Endothelial cell of umbilical vein (primary cell): ENCODE measurements at regions of chr17 and their contacts with region 1.

Region 1: DNA sequence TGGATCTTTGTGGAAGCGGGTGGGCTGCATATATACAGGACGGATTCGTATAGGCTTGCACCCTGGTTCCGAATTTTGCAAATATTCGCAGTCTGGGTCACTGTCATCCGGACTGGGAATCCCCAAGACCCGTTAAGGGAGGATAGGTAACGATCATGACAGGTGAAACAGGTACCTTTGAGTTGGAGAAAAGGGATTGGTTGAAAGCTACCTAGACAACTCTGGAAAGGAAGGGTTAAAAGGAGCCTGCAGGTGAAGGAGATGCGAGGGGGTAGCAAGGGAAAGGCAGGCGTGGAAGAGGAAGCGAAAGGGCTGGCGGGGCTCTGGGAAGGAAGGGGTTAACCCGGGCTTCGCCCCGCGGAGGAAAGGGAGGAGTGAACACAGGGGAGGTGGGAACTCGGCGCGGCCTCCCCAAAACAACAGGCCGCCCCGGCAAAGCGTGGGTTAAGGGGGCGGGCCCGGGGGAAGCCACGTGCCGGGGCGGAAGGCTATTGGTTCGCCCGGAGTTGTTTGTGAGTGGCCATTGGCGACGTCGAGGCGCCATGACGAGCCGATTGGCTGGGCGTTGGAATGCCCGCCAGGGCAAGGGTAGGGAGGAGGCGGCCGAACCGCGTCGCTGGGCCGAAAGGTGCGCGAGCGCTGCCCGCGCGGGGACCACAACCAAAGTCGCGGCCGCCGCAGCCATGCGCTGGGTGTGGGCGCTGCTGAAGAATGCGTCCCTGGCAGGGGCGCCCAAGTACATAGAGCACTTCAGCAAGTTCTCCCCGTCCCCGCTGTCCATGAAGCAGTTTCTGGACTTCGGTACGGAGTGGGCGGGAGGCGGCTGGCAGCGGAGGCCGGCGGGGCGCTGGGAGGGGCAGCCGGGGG is at the start of gene PDK2:
- DNase-seq: peak; percentile 94
- H3K4me3 ChIP-seq: peak within 1 kb of the TSS; percentile 33 to 85 (median 46)
- H3K27ac ChIP-seq: no peak within 1 kb of the TSS
- H3K4me1 ChIP-seq: peaks cover 10% of the 10 kb centered on the region
- H3K27me3 ChIP-seq: no peaks in the 10 kb centered on the region
- CTCF ChIP-seq: no peak
- POLR2A ChIP-seq: no peak
- total RNA-seq, gene PDK2: 17.4 and 21.3 TPM in 2 replicates

Region 2: DNA sequence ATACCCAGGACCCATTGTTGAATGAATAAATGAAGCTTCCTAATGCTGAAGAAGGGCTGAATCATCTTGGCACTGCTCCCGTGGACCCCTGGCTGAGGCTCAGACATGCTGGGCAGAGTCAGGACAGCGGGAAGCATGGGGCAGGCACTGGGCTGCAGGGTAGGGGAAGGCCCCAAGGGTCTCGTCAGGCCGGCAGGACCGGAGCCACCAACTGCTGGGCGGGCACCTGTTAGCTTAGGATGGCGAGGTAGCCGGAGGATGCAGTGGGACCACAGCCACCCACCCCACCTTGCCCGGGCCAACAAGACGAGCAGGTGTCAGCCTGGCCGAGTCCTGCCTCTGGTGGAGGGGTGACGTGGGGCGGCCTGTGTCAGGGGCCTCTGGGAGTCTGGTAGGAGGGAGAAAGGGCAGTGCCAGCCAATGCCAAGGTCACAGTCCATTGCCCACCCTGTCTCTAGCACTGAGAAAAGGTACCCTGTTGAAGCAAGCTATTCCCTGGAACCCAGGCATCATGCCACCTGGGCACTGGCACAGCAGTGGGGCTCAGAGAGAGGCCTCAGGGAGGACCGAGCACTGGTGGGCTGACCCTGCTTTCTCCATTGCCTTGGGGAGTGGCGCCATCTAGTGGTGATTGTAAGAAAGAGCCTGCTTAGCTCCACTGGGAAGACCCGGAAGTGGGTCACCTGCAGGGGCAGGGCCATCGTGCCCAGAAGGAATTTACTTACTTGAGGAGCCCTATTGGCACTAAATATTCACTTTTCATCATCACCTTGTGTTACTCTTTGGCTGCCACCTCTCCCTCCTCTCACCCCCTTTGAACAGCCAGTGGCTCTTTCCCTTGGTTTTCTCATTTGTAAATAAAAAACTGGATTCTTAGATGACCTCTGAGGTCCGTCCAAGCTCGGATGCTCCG is 96.9 kb before region 1 on chr17:
- CTCF ChIA-PET with region 1: interaction called, 13 read pairs
- POLR2A ChIA-PET with region 1: no interaction called
- dilution Hi-C with region 1: no loop called
- intact Hi-C with region 1: no loop called
- DNase-seq: peak; percentile 74
- H3K4me3 ChIP-seq: no peak overlapping the region
- H3K27ac ChIP-seq: no peak overlapping the region
- H3K4me1 ChIP-seq: no peaks in the 10 kb centered on the region
- H3K27me3 ChIP-seq: peaks cover 41 to 53% of the 10 kb centered on the region in 2 experiments
- CTCF ChIP-seq: peak; percentile 83 to 87
- POLR2A ChIP-seq: no peak

Region 3: DNA sequence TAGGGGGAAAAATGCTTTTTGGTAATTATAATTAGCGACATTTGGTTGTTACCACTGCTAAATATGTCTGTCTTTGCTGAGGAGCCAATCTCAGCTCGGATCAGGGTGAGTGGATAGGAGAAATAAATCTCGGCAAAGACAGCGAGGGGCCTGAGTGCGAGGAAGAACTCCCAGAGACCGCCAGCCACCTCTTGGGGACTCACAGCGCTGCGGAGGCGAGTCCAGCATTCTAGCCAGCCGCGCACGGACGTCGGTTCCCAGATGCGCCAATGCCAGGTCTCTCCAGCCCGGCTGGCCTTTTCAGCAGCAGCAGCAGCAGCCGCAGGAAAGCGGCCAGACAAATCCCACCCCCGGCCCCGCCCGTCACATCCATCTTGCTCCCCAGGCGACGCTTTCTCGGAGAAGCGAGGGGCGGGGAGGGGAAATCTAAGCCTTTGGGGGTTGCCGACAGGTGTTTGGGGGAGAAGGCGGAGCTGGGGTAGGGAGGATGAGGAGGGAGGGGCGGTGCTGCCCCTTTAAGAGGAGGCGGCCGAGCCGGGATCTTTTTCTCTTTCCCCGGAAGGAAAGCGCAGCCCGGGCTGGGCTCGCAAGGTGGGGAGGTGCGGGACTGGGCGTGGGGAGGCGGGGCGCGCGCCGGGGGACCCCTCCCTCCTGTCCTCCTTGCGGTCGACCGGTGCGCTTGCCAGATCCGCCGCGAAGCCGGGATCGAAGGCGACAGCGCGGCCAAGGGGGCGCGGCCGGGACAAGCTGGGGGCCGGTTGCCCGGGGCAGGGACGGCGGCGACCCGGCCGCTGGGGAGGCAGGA is 39.4 kb before region 1 on chr17 and contains the start of gene ITGA3:
- CTCF ChIA-PET with region 1: interaction called, 55 read pairs
- POLR2A ChIA-PET with region 1: no interaction called
- dilution Hi-C with region 1: no loop called
- intact Hi-C with region 1: no loop called
- DNase-seq: peak; percentile 80
- H3K4me3 ChIP-seq: peak within 1 kb of the TSS; percentile 65 to 77 (median 77)
- H3K27ac ChIP-seq: peak within 1 kb of the TSS; percentile 39
- H3K4me1 ChIP-seq: peaks cover 65% of the 10 kb centered on the region
- H3K27me3 ChIP-seq: no peaks in the 10 kb centered on the region
- CTCF ChIP-seq: no peak
- POLR2A ChIP-seq: peak; percentile 57
- total RNA-seq, gene ITGA3: 93.8 and 112 TPM in 2 replicates

Region 4: DNA sequence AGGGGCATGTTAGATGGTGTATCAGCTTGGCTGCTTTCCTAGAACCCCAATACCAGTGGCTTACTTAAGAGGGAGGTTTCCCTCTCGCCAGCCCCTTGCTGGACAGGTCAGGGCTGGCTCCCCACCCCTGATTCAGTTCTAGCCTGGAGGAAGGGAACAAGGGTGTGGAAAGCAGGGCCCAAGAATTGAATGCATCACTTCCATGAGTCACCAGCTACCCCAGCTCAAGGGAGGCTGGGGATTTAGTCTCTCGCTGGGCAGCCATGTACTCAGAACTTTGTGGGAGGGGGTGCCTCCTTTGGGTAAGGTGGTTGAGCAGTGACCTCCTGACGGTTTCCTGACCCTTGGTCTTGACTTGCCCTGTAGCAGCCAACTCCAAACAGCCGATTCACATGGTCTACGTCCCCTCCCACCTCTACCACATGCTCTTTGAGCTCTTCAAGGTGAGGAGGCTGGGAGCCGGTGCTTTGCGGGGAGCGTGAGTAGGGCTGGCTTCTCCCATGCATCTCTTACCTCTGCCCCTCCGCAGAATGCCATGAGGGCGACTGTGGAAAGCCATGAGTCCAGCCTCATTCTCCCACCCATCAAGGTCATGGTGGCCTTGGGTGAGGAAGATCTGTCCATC is 12.9 kb after region 1 on chr17:
- CTCF ChIA-PET with region 1: interaction called, 29 read pairs
- POLR2A ChIA-PET with region 1: no interaction called
- dilution Hi-C with region 1: no loop called
- intact Hi-C with region 1: no loop called
- DNase-seq: no peak
- H3K4me3 ChIP-seq: no peak overlapping the region
- H3K27ac ChIP-seq: no peak overlapping the region
- H3K4me1 ChIP-seq: no peaks in the 10 kb centered on the region
- H3K27me3 ChIP-seq: no peaks in the 10 kb centered on the region
- CTCF ChIP-seq: no peak
- POLR2A ChIP-seq: no peak

Region 5: DNA sequence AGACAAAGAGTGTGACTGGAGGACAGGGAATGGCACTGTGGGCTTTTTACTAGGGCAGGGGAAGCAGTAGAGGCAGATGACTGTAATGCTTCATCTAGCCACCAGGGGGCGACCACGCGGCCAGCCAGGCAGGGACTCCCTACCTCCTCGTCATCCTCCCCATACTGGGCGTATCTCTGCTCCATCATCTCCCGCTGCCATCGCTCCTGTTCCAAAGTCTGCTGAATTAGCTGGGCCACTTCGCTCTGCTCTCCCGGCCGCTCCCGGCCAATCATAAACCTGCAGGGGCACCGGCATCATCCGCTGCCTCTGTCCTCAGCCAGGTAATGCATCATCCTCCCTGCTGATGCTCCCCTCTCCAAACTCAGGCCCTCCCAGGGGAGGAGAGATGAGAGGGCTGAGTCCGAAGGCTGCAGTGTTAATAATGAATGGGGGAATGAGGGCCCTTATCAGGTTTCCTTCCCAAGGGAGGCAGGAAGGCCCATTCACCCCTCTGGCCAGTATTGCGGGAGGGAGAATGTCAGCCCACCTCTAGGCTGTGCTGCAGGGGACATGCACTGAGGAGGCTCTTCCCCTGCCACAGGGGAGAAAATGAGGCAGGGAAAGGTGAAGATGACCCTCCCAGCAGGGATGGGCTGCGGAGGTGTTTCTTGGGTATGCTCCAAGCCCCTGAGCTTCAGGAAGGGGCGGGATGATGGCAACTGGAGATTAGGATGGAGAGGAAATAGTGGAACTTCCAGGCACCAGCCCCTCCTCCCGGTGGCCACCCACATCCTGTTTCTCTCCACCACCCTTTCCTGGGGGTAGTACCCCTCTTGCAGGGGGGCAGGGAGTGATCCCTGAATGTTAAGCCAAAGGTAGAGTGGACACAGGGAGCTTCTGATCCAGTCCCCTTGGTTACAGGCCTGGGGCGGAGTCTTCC is 45.2 kb after region 1 on chr17:
- CTCF ChIA-PET with region 1: interaction called, 15 read pairs
- POLR2A ChIA-PET with region 1: no interaction called
- dilution Hi-C with region 1: no loop called
- intact Hi-C with region 1: loop called (anchors 1 kb)
- DNase-seq: peak; percentile 78
- H3K4me3 ChIP-seq: no peak overlapping the region
- H3K27ac ChIP-seq: no peak overlapping the region
- H3K4me1 ChIP-seq: peaks cover 32% of the 10 kb centered on the region
- H3K27me3 ChIP-seq: no peaks in the 10 kb centered on the region
- CTCF ChIP-seq: peak; percentile 94 to 99
- POLR2A ChIP-seq: no peak

Region 6: GRCh38 chr17:50169121-50169764 is 74.3 kb after region 1 on chr17:
- CTCF ChIA-PET with region 1: interaction called, 13 read pairs
- POLR2A ChIA-PET with region 1: no interaction called
- dilution Hi-C with region 1: no loop called
- intact Hi-C with region 1: no loop called
- DNase-seq: peak; percentile 65
- H3K4me3 ChIP-seq: no peak overlapping the region
- H3K27ac ChIP-seq: no peak overlapping the region
- H3K4me1 ChIP-seq: peaks cover 5% of the 10 kb centered on the region
- H3K27me3 ChIP-seq: no peaks in the 10 kb centered on the region
- CTCF ChIP-seq: peak; percentile 78 to 88
- POLR2A ChIP-seq: no peak

Region 7: DNA sequence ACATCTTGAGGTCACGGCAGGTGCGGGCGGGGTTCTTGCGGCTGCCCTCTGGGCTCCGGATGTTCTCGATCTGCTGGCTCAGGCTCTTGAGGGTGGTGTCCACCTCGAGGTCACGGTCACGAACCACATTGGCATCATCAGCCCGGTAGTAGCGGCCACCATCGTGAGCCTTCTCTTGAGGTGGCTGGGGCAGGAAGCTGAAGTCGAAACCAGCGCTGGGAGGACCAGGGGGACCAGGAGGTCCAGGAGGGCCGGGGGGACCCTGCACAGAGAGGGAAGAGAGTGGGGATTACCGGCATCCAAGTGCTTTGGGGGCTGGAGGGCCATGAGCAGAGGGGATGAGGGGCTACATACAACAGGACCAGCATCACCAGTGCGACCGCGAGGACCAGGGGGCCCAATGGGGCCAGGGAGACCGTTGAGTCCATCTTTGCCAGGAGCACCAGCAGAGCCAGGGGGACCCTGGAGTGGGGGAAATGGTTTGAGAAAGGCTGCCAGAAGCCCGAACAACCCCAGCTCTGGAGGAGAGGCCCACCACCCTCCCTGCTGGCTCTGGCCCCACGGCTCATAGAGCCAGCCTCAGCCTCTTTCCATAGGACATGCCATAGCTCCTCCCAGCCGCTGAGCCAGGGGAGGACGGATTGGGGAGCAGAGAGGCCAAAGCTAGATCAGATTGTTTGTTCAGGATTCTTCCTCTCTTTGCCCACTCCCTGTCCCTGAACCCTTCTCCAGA is 91.8 kb after region 1 on chr17:
- CTCF ChIA-PET with region 1: no interaction called
- POLR2A ChIA-PET with region 1: no interaction called
- dilution Hi-C with region 1: no loop called
- intact Hi-C with region 1: no loop called
- DNase-seq: no peak
- H3K4me3 ChIP-seq: no peak overlapping the region
- H3K27ac ChIP-seq: no peak overlapping the region
- H3K4me1 ChIP-seq: no peaks in the 10 kb centered on the region
- H3K27me3 ChIP-seq: no peaks in the 10 kb centered on the region
- CTCF ChIP-seq: no peak
- POLR2A ChIP-seq: no peak

Region 8: DNA sequence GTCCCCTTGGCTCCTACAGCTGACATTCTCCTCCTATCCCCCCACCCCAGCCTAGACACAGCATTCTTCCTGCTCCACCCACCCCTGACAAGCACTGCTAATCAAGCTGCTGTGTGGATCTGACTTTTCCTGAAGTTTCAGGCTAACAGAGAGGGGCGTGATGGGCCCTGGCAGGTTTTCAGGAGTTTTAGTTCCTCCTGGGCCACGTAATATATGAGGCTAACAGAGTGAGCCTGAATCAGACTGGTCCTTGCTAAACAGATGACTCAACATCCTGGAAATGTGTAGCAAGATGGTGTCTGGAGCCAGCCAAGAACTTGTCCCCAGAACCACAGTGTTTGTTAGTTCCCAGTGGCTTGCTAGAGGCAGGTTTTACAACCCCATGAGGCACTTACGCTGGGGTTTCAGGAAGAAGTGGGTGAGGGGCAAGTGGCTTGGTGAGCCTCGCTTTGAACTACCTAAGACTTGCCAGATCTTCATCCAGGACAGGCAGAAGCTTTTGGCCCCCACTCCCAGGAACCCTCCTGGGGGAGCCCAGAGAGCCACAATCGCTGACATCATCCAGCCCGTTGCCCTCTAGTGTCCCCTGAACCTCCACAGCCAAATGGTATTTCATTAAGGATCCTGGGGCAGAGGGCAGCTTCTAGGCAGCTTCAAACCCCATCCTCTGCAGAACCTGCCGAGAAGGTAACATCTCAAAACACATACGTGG is 195.2 kb after region 1 on chr17:
- CTCF ChIA-PET with region 1: interaction called, 11 read pairs
- POLR2A ChIA-PET with region 1: no interaction called
- dilution Hi-C with region 1: no loop called
- intact Hi-C with region 1: no loop called
- DNase-seq: peak; percentile 90
- H3K4me3 ChIP-seq: no peak overlapping the region
- H3K27ac ChIP-seq: peak overlapping the region; percentile 83
- H3K4me1 ChIP-seq: peaks cover 15% of the 10 kb centered on the region
- H3K27me3 ChIP-seq: no peaks in the 10 kb centered on the region
- CTCF ChIP-seq: no peak
- POLR2A ChIP-seq: peak; percentile 21